ENCODE measurements at regions of chr19 and their contacts with region 1.

Region 1: GRCh38 chr19:3360421-3361383 is 5.7 kb upstream of the NFIC start:
- DNase-seq: peak in 1 of 2 donors; percentile 52
- H3K4me3 ChIP-seq: peak overlapping the region; percentile 70 to 100 (median 94)
- H3K27ac ChIP-seq: peak overlapping the region; percentile 87 to 99
- H3K4me1 ChIP-seq: peaks cover 8 to 10% of the 10 kb centered on the region in 2 donors
- H3K27me3 ChIP-seq: no peaks in the 10 kb centered on the region
- CTCF ChIP-seq: peak in 1 of 3 donors; percentile 15
- POLR2A ChIP-seq: peak; percentile 29

Region 2: GRCh38 chr19:1855040-1855827 is 1505.5 kb before region 1 on chr19:
- intact Hi-C with region 1: loop called (anchors 5 kb)
- DNase-seq: peak; percentile 88 to 93
- H3K4me3 ChIP-seq: peak overlapping the region; percentile 44 to 78 (median 56)
- H3K27ac ChIP-seq: peak overlapping the region; percentile 93 to 95
- H3K4me1 ChIP-seq: peaks cover 15 to 31% of the 10 kb centered on the region in 2 donors
- H3K27me3 ChIP-seq: no peaks in the 10 kb centered on the region
- CTCF ChIP-seq: no peak
- POLR2A ChIP-seq: no peak

Region 3: GRCh38 chr19:3440082-3440481 is 79.4 kb after region 1 on chr19:
- intact Hi-C with region 1: no loop called
- DNase-seq: no peak
- H3K4me3 ChIP-seq: no peak overlapping the region
- H3K27ac ChIP-seq: peak overlapping the region in 1 of 2 donors; percentile 5
- H3K4me1 ChIP-seq: no peaks in the 10 kb centered on the region
- H3K27me3 ChIP-seq: no peaks in the 10 kb centered on the region
- CTCF ChIP-seq: peak in 2 of 3 donors; percentile 29 to 30
- POLR2A ChIP-seq: no peak

Measured in breast epithelium (tissue), 4 donors.